CD4-positive, alpha-beta T cell (primary cell): ENCODE measurements at regions of chr3 and their contacts with region 1.

Region 1: GRCh38 chr3:115819785-115820384 is 196.6 kb downstream of the GAP43 start:
- DNase-seq: peak; percentile 18 to 89 (median 40)
- ATAC-seq: peak; percentile 95
- H3K4me3 ChIP-seq: no peak overlapping the region
- H3K4me3 Mint-ChIP-seq: no peak overlapping the region
- H3K27ac ChIP-seq: no peak overlapping the region
- H3K27ac Mint-ChIP-seq: no peak overlapping the region
- H3K4me1 ChIP-seq: no peaks in the 10 kb centered on the region
- H3K4me1 Mint-ChIP-seq: no peaks in the 10 kb centered on the region
- H3K27me3 ChIP-seq: no peaks in the 10 kb centered on the region
- H3K27me3 Mint-ChIP-seq: no peaks in the 10 kb centered on the region
- CTCF ChIP-seq: peak; percentile 100

Region 2: DNA sequence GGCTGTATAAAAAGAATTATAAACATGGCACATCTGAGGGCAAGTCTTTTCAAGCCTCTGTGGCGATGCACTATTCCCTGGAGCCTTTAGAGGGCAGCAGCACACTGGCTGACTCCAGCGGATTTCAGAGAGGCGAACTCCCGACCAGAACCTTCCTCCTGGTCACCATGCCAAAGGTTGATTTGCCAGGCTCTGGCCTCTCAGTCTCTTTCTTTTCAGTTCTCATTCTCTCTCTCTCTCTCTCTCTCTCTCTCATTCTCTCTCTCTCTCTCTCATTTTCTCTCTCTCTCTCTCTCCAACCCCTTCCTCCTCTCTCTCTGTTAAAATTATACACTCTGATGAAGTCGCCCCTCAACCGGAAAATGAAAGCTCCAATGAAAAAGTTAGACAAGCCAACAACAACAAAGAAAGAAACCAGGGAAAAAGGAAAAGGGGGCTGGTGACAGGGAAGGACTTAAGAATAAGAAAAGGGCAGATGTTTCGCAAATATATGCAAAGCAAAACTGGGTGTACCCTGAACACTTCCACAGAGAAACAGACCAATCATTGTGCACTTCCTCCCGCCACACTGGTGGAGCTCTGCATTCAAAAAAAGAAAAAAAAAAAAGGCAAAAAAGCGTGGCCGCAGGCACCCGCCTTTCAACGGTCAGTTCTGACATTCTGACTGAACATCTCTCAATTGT is 1435.9 kb before region 1 on chr3:
- CTCF ChIA-PET with region 1: no interaction called
- POLR2A ChIA-PET with region 1: no interaction called
- intact Hi-C with region 1: loop called in 1 of 2 experiments (anchors 5 kb)
- DNase-seq: peak; percentile 26 to 78 (median 50)
- ATAC-seq: peak; percentile 97
- H3K4me3 ChIP-seq: peak overlapping the region; percentile 27
- H3K4me3 Mint-ChIP-seq: peak overlapping the region; percentile 58
- H3K27ac ChIP-seq: no peak overlapping the region
- H3K27ac Mint-ChIP-seq: no peak overlapping the region
- H3K4me1 ChIP-seq: peaks cover 11% of the 10 kb centered on the region
- H3K4me1 Mint-ChIP-seq: peaks cover 21% of the 10 kb centered on the region
- H3K27me3 ChIP-seq: no peaks in the 10 kb centered on the region
- H3K27me3 Mint-ChIP-seq: no peaks in the 10 kb centered on the region
- CTCF ChIP-seq: peak; percentile 89

Region 3: DNA sequence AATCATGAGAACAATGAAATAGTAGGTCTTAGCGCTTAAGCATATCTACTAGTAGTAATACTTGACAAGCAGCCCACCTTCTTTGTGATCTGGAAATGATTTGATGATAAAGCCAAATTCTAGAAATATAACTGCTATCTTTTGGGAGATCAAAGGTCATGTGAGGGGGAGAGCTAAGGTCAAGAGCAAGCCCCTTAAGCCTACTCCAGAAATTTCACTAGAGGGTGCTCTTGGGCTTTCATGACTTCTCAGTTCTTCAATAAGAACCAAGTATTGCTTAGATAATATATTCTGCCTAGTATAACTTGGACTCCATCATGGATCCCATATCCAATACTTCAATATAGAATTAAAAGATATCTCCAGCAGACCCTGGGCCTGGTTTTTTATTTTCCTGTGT is 992.4 kb before region 1 on chr3:
- CTCF ChIA-PET with region 1: no interaction called
- POLR2A ChIA-PET with region 1: no interaction called
- intact Hi-C with region 1: loop called in 1 of 2 experiments (anchors 5 kb)
- DNase-seq: peak in 3 of 14 experiments; percentile 36 to 47 (median 38)
- ATAC-seq: no peak
- H3K4me3 ChIP-seq: no peak overlapping the region
- H3K4me3 Mint-ChIP-seq: no peak overlapping the region
- H3K27ac ChIP-seq: no peak overlapping the region
- H3K27ac Mint-ChIP-seq: no peak overlapping the region
- H3K4me1 ChIP-seq: no peaks in the 10 kb centered on the region
- H3K4me1 Mint-ChIP-seq: peaks cover 6% of the 10 kb centered on the region
- H3K27me3 ChIP-seq: no peaks in the 10 kb centered on the region
- H3K27me3 Mint-ChIP-seq: no peaks in the 10 kb centered on the region
- CTCF ChIP-seq: peak; percentile 17

Region 4: DNA sequence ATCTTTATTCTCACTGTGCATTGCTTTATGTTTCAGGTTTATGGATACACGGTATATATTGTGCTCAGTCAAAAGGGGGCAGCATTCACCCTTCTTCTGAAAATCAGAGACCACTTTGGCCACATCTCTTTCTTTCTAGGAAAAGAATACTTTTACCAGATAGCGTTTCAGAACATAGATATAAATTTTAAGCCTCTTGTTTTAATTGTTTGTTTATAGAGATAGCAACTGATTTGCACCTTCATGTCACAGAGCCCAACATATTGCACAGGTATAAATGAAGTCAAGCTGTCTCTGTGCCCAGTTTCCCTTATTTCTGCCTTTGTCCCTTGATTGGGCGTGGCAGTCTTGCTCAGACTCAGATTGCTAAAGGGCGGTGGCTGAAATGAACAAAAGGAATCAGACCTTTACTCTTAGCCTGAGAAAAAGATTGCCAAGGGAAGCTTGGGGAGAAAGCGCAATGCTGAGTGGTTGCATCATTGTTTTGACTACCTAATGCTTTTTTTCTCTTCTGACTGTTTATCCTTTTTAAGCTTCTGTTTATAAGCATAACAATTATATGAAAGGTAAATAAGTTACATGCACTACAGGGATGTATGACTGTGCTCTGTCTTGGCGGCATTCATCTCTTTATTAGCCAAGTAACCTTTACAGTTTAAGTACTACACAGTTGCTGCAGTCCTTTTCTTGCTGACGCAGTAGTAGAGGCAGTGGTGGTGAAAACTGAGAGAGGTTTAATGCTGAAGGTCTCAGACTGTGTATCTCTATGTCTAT is 602.0 kb before region 1 on chr3:
- CTCF ChIA-PET with region 1: no interaction called
- POLR2A ChIA-PET with region 1: no interaction called
- intact Hi-C with region 1: loop called in 1 of 2 experiments (anchors 10 kb)
- DNase-seq: peak in 3 of 14 experiments; percentile 22 to 38 (median 38)
- ATAC-seq: no peak
- H3K4me3 ChIP-seq: no peak overlapping the region
- H3K4me3 Mint-ChIP-seq: no peak overlapping the region
- H3K27ac ChIP-seq: no peak overlapping the region
- H3K27ac Mint-ChIP-seq: no peak overlapping the region
- H3K4me1 ChIP-seq: no peaks in the 10 kb centered on the region
- H3K4me1 Mint-ChIP-seq: no peaks in the 10 kb centered on the region
- H3K27me3 ChIP-seq: no peaks in the 10 kb centered on the region
- H3K27me3 Mint-ChIP-seq: no peaks in the 10 kb centered on the region
- CTCF ChIP-seq: peak; percentile 29

Region 5: GRCh38 chr3:115855911-115856310 is 36.0 kb after region 1 on chr3:
- CTCF ChIA-PET with region 1: no interaction called
- POLR2A ChIA-PET with region 1: no interaction called
- intact Hi-C with region 1: no loop called
- DNase-seq: no peak
- ATAC-seq: no peak
- H3K4me3 ChIP-seq: no peak overlapping the region
- H3K4me3 Mint-ChIP-seq: no peak overlapping the region
- H3K27ac ChIP-seq: no peak overlapping the region
- H3K27ac Mint-ChIP-seq: no peak overlapping the region
- H3K4me1 ChIP-seq: no peaks in the 10 kb centered on the region
- H3K4me1 Mint-ChIP-seq: no peaks in the 10 kb centered on the region
- H3K27me3 ChIP-seq: peaks cover 0 to 8% of the 10 kb centered on the region in 2 experiments
- H3K27me3 Mint-ChIP-seq: peaks cover 47% of the 10 kb centered on the region
- CTCF ChIP-seq: no peak